GM12878 (cell line): ENCODE measurements at regions of chr2 and their contacts with region 1.

Region 1: GRCh38 chr2:42598656-42599055 is 30.2 kb downstream of the MTA3 start:
- DNase-seq: no peak
- ATAC-seq: peak; percentile 64
- H3K4me3 ChIP-seq: peak overlapping the region; percentile 31; the same call in 1 of the 2 replicates
- H3K27ac ChIP-seq: peak overlapping the region; percentile 77
- H3K4me1 ChIP-seq: peaks cover 33% of the 10 kb centered on the region
- H3K27me3 ChIP-seq: no peaks in the 10 kb centered on the region
- CTCF ChIP-seq: peak in 2 of 3 experiments; percentile 12 to 28; a peak in 3 of 6 replicates
- EP300 ChIP-seq: no peak
- POLR2A ChIP-seq: no peak
- RAD21 ChIP-seq: peak; percentile 33; the same call in 1 of the 2 replicates

Region 2: GRCh38 chr2:42494355-42495233 is 104.1 kb before region 1 on chr2:
- CTCF ChIA-PET with region 1: no interaction called
- POLR2A ChIA-PET with region 1: no interaction called
- RAD21 ChIA-PET with region 1: no interaction called
- SMC1A ChIA-PET with region 1: no interaction called
- in situ Hi-C with region 1: no loop called
- intact Hi-C with region 1: loop called (anchors 5 kb)
- DNase-seq: peak; percentile 35
- ATAC-seq: peak; percentile 90
- H3K4me3 ChIP-seq: peak overlapping the region; percentile 76
- H3K27ac ChIP-seq: no peak overlapping the region
- H3K4me1 ChIP-seq: no peaks in the 10 kb centered on the region
- H3K27me3 ChIP-seq: peaks cover 3 to 13% of the 10 kb centered on the region in 2 experiments
- CTCF ChIP-seq: peak; percentile 83 to 90 (median 89)
- EP300 ChIP-seq: no peak
- POLR2A ChIP-seq: no peak
- RAD21 ChIP-seq: peak; percentile 91

Region 3: DNA sequence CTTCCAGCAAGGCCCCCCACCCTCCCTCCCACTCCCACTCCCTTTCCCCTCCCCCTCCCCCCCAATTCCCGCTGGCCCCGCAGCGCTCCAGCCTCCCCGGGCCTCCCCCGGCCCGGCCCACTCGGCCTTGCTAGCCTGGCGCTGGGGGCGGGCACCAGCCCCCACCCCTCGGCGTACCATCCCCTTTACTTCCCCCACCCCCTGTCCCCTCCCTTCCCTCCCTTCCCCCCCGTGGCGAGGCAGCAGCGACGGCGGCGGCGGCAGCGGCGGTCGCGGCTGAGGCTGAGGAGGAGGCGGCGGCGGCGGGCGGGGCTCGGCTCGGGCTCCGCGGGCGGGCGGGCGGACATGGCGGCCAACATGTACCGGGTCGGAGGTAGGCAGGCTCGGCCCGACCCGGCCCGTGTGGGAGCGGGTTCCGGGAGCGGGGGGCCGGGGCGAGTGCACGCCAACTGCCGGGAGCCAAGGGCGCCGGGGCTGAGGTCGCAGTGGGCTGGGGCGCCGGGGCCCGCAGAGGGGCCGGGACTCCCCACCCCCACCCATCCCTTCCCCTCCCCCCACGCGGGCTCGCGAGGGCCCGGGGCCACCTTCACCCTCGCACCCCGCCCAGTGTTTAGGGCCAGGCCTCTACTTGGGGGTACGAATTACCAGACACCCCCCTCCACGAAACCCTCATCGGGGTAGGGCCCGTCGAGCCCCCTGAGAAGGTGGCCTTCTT is 30.1 kb before region 1 on chr2 and contains the start of gene MTA3:
- CTCF ChIA-PET with region 1: interaction called, 6 read pairs
- POLR2A ChIA-PET with region 1: interaction called, 6 read pairs
- RAD21 ChIA-PET with region 1: interaction called, 5 read pairs
- SMC1A ChIA-PET with region 1: interaction called, 15 read pairs
- in situ Hi-C with region 1: no loop called
- intact Hi-C with region 1: loop called (anchors 2 kb)
- DNase-seq: no peak
- ATAC-seq: peak; percentile 79
- H3K4me3 ChIP-seq: peak within 1 kb of the TSS; percentile 76
- H3K27ac ChIP-seq: peak within 1 kb of the TSS; percentile 80
- H3K4me1 ChIP-seq: peaks cover 24% of the 10 kb centered on the region
- H3K27me3 ChIP-seq: no peaks in the 10 kb centered on the region
- CTCF ChIP-seq: no peak
- EP300 ChIP-seq: no peak
- POLR2A ChIP-seq: peak; percentile 63; the same call in 1 of the 2 replicates
- RAD21 ChIP-seq: no peak
- polyA plus RNA-seq, gene MTA3: 17.6 to 21.5 TPM

Region 4: GRCh38 chr2:42575458-42576064 is 23.1 kb before region 1 on chr2:
- CTCF ChIA-PET with region 1: interaction called, 3 read pairs
- POLR2A ChIA-PET with region 1: interaction called, 6 read pairs
- RAD21 ChIA-PET with region 1: interaction called, 5 read pairs
- SMC1A ChIA-PET with region 1: interaction called, 10 read pairs
- in situ Hi-C with region 1: no loop called
- intact Hi-C with region 1: no loop called
- DNase-seq: no peak
- ATAC-seq: peak; percentile 88
- H3K4me3 ChIP-seq: peak overlapping the region; percentile 24
- H3K27ac ChIP-seq: peak overlapping the region; percentile 43
- H3K4me1 ChIP-seq: peaks cover 11% of the 10 kb centered on the region
- H3K27me3 ChIP-seq: no peaks in the 10 kb centered on the region
- CTCF ChIP-seq: no peak
- EP300 ChIP-seq: no peak
- POLR2A ChIP-seq: no peak
- RAD21 ChIP-seq: no peak

Region 5: DNA sequence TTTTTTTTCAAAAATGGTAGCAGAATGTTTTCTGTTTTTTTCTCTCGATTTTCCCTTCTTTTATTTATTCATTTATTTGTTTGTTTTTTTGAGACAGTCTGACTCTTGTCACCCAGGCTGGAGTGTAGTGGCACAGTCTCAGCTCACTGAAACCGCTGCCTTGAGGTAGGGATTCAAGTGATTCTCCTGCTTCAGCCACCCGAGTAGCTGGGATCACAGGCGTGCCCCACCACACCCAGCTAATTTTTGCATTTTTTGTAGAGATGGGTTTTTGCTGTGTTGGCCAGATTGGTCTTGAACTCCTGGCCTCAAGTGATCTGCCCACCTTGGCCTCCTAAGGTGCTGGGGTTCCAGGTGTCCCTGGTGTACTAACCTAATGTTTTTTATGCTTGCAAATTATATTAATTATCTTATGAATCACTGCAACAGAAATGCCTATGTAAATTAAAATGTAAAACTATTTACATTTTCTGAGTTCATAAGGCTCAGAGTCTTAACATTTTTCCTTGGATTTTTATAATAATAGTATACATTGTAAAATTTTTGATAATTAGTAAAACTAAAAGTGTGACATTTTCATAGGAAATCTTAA is 11.0 kb before region 1 on chr2:
- CTCF ChIA-PET with region 1: interaction called, 5 read pairs
- POLR2A ChIA-PET with region 1: interaction called, 4 read pairs
- RAD21 ChIA-PET with region 1: interaction called, 4 read pairs
- SMC1A ChIA-PET with region 1: interaction called, 10 read pairs
- in situ Hi-C with region 1: no loop called
- intact Hi-C with region 1: no loop called
- DNase-seq: no peak
- ATAC-seq: no peak
- H3K4me3 ChIP-seq: no peak overlapping the region
- H3K27ac ChIP-seq: no peak overlapping the region
- H3K4me1 ChIP-seq: no peaks in the 10 kb centered on the region
- H3K27me3 ChIP-seq: no peaks in the 10 kb centered on the region
- CTCF ChIP-seq: no peak
- EP300 ChIP-seq: no peak
- POLR2A ChIP-seq: no peak
- RAD21 ChIP-seq: no peak

Region 6: DNA sequence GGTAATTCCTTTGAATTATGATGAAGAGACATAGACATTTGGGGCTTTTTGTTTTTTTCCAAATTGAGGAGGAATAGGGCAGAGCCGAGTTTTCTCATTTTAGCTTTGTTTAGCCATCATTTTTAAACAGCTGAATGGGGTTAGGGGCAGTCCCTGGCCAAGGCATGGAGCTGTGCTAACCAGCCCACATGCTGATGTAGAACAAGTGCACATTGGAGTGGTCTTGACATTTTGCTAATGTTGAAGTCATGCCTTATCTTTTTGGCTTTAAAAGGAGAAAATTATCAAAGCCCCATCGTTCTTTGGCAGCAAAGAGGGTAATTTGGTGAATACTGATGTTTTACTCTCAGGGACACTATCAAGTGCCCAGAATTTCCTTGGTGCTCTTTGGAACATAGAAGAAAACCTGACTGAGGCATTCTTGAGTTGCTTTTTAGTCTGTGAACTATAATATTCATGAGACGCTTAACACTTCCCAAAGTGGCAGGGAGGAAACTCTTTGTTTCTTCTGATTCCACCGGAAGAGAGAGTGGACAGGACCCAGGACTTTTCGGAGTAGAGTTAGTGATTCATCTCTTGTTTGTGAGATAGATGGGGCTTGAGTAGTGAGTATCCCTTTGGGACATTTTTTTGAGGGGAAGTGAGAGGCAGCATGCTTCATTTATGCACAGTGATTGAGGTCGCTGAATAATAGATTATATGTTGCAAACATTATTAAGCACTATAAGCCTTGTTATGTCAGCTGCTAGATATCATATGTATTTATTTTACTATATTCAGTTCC is 14.8 kb after region 1 on chr2:
- CTCF ChIA-PET with region 1: interaction called, 4 read pairs
- POLR2A ChIA-PET with region 1: no interaction called
- RAD21 ChIA-PET with region 1: interaction called, 4 read pairs
- SMC1A ChIA-PET with region 1: interaction called, 11 read pairs
- in situ Hi-C with region 1: no loop called
- intact Hi-C with region 1: no loop called
- DNase-seq: no peak
- ATAC-seq: no peak; the same call in 2 of the 3 replicates
- H3K4me3 ChIP-seq: no peak overlapping the region
- H3K27ac ChIP-seq: no peak overlapping the region
- H3K4me1 ChIP-seq: no peaks in the 10 kb centered on the region
- H3K27me3 ChIP-seq: no peaks in the 10 kb centered on the region
- CTCF ChIP-seq: no peak
- EP300 ChIP-seq: no peak
- POLR2A ChIP-seq: no peak
- RAD21 ChIP-seq: no peak

Region 7: DNA sequence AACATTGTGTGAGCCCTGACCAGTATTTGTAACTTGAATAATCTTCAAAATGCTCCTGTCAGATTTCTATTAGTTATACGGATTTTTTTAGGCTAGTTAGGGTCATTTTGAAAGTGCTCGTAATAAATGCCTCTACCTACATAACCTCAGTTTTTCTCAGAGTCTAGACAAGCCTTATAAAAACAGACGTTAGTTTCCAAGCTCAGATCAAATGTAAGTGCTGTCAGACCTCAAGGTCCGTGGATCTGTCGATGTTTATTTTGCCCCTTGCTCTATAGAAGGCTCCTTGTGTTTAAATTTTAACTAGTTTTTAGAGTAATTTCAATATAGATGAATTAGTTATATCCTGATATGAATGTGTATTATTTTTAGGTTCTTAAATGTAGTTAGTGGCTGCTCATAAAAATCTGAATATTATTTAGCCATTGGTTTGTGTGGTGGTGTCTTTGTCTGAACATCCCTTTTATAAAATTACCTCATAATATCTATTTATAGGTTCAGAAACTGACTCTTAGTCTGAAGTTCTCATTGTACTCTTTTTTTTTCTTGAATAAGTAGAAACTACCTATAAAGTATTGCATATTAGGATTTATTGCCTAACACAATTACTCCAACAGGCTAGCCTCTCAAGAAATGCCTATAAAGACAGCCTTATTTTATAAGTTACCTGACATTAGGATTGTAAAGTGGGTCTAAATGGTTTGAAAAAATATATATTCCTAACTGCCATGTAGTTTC is 40.9 kb after region 1 on chr2:
- CTCF ChIA-PET with region 1: interaction called, 4 read pairs
- POLR2A ChIA-PET with region 1: interaction called, 5 read pairs
- RAD21 ChIA-PET with region 1: interaction called, 17 read pairs
- SMC1A ChIA-PET with region 1: interaction called, 16 read pairs
- in situ Hi-C with region 1: no loop called
- intact Hi-C with region 1: no loop called
- DNase-seq: no peak
- ATAC-seq: peak; percentile 81
- H3K4me3 ChIP-seq: no peak overlapping the region
- H3K27ac ChIP-seq: peak overlapping the region; percentile 43; the same call in 1 of the 2 replicates
- H3K4me1 ChIP-seq: peaks cover 4% of the 10 kb centered on the region
- H3K27me3 ChIP-seq: no peaks in the 10 kb centered on the region
- CTCF ChIP-seq: no peak
- EP300 ChIP-seq: no peak
- POLR2A ChIP-seq: no peak
- RAD21 ChIP-seq: no peak

Region 8: DNA sequence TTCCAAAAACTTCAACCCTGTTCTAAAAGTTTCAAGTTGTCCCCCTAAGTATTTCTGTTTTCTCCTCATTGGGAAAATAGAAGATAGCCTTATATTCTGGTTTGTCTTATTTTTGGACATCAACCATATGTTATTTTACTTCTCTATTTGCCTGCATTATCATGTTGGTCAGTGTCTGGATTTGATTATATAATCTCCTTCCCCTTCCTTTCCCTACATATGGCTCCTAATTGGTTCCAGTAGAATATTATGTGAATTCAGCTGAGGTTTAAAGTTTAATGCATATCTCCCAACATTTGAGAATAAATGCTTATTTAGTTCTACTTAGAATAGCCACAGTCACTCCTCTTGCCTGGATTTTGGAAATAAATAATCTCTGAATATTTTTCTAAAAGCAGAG is 98.3 kb after region 1 on chr2:
- CTCF ChIA-PET with region 1: no interaction called
- POLR2A ChIA-PET with region 1: no interaction called
- RAD21 ChIA-PET with region 1: no interaction called
- SMC1A ChIA-PET with region 1: no interaction called
- in situ Hi-C with region 1: no loop called
- intact Hi-C with region 1: no loop called
- DNase-seq: no peak
- ATAC-seq: no peak
- H3K4me3 ChIP-seq: no peak overlapping the region
- H3K27ac ChIP-seq: no peak overlapping the region
- H3K4me1 ChIP-seq: no peaks in the 10 kb centered on the region; the same call in 1 of the 2 replicates
- H3K27me3 ChIP-seq: no peaks in the 10 kb centered on the region
- CTCF ChIP-seq: no peak
- EP300 ChIP-seq: no peak
- POLR2A ChIP-seq: no peak
- RAD21 ChIP-seq: no peak

Region 9: GRCh38 chr2:43513216-43513615 is 914.6 kb after region 1 on chr2:
- CTCF ChIA-PET with region 1: no interaction called
- POLR2A ChIA-PET with region 1: no interaction called
- RAD21 ChIA-PET with region 1: no interaction called
- SMC1A ChIA-PET with region 1: no interaction called
- in situ Hi-C with region 1: no loop called
- intact Hi-C with region 1: no loop called
- DNase-seq: peak; percentile 15
- ATAC-seq: peak; percentile 55
- H3K4me3 ChIP-seq: no peak overlapping the region
- H3K27ac ChIP-seq: no peak overlapping the region; the same call in 1 of the 2 replicates
- H3K4me1 ChIP-seq: peaks cover 11% of the 10 kb centered on the region
- H3K27me3 ChIP-seq: no peaks in the 10 kb centered on the region
- CTCF ChIP-seq: no peak
- EP300 ChIP-seq: no peak
- POLR2A ChIP-seq: no peak
- RAD21 ChIP-seq: no peak